Transverse colon (tissue), 4 donors: ENCODE measurements at regions of chr6 and their contacts with region 1.

Region 1: GRCh38 chr6:38493931-38494547 is 145.7 kb downstream of the BTBD9 start:
- DNase-seq: peak; percentile 82
- H3K4me3 ChIP-seq: no peak overlapping the region
- H3K27ac ChIP-seq: no peak overlapping the region
- H3K4me1 ChIP-seq: peaks cover 0 to 4% (median 0%) of the 10 kb centered on the region in 4 donors
- H3K27me3 ChIP-seq: no peaks in the 10 kb centered on the region
- CTCF ChIP-seq: peak; percentile 91 to 95 (median 93)
- EP300 ChIP-seq: no peak
- POLR2A ChIP-seq: no peak

Region 2: DNA sequence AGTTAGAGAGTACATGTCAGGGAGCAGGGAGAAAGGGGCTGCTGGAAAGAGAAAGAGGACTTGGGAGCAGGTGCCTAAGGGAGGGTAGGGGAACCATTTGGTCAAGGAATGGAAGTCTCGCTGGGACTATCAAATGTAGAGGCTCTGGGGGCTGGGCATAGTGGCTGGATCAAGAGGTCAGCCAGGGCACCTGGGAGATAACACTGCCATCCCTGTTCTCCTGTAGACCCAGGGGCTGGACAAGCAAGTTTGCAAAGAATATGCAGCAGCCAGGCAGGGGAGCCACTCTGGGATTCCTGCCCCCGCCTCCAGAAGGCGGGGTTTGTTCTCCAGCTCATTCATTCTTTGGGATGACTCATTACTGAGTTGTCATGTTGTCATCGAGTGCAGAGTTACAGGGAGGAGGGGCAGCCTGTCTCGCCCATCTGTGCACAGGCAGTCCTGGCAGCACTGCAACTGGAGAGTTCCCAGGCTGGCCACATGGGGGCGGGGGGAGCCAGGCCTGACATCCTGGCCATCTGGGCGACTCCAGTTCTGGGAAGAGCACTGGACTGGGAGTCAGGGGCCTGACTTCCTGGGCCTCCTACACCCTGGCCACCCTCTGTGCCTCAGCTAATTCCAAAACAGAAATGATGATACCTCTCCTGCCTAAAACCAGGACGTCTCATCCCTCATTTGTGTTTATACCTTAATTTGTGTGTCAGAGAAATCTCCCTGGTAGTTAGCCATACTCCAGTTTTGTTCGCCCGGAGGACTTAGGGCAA is 702.7 kb before region 1 on chr6:
- in situ Hi-C with region 1: loop called in 2 of 4 experiments (anchors 25 kb)
- intact Hi-C with region 1: loop called (anchors 10 kb)
- DNase-seq: peak; percentile 91
- H3K4me3 ChIP-seq: no peak overlapping the region
- H3K27ac ChIP-seq: no peak overlapping the region
- H3K4me1 ChIP-seq: peaks cover 0 to 9% (median 5%) of the 10 kb centered on the region in 4 donors
- H3K27me3 ChIP-seq: no peaks in the 10 kb centered on the region
- CTCF ChIP-seq: peak; percentile 92 to 96 (median 94)
- EP300 ChIP-seq: no peak
- POLR2A ChIP-seq: no peak

Region 3: GRCh38 chr6:38034274-38034914 is 459.6 kb before region 1 on chr6:
- in situ Hi-C with region 1: loop called in 2 of 4 experiments (anchors 25 kb)
- intact Hi-C with region 1: no loop called
- DNase-seq: no peak
- H3K4me3 ChIP-seq: no peak overlapping the region
- H3K27ac ChIP-seq: no peak overlapping the region
- H3K4me1 ChIP-seq: peaks cover 0 to 18% (median 9%) of the 10 kb centered on the region in 4 donors
- H3K27me3 ChIP-seq: no peaks in the 10 kb centered on the region
- CTCF ChIP-seq: peak in 4 of 5 experiments; percentile 14 to 37 (median 28)
- EP300 ChIP-seq: no peak
- POLR2A ChIP-seq: no peak